HepG2 (cell line): ENCODE measurements at regions of chr6 and their contacts with region 1.

Region 1: DNA sequence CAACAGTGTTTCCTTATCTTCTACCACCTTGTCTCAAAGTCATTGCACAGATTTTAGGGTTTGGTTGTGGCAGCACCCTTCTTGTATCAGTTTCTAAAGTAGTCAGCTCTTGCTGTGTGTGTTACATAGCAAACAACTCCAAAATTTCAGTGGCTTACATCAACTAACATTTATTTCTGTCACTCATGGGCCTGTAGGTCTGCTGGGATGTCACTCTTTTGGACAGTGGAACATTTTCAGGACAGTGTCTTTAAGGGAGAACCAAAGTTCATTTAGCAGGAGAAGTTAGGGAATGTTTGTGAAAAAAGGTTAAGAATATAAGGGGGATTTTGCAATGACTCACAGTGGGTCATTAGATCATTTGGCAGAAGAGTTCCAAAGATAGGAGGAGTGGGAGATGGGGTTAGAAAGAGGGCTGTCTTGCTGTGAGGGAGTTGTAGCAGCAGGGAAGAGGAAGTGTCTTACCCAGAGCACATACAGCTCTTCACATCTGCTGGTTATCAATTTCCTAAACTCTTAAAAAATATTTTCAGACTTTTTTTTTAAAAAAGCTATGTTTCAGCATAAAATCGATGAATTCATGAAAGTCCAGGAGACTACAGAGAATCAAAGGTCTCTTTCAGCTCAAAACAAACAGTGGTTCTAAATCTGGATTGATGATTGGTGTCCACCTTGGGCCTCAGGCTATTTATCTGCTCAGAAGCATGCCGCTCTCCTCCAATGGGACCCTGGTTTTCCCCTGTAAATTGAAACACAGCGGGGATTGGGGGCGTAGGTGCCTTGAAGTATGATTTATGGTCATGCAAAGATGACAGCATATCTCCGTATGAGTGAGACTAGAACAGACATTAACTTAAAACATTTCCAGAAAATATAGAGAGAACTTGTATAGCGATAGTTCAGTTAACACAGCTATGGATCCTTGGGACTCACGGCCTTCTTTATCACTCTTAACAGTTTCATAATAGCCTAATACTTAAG is 117.3 kb downstream of the B3GAT2 start:
- DNase-seq: peak; percentile 34
- ATAC-seq: peak; percentile 92
- H3K4me3 ChIP-seq: no peak overlapping the region
- H3K27ac ChIP-seq: peak overlapping the region; percentile 78
- H3K4me1 ChIP-seq: peaks cover 39% of the 10 kb centered on the region
- H3K27me3 ChIP-seq: no peaks in the 10 kb centered on the region; a peak in 1 of 5 replicates
- CTCF ChIP-seq: no peak
- EP300 ChIP-seq: 0 out of 4 replicates have a peak, but pooled peaks of 1 of the 2 experiments have one; percentile 11
- POLR2A ChIP-seq: no peak
- RAD21 ChIP-seq: no peak

Region 2: GRCh38 chr6:70823651-70824050 is 15.9 kb before region 1 on chr6:
- CTCF ChIA-PET with region 1: no interaction called
- POLR2A ChIA-PET with region 1: no interaction called
- in situ Hi-C with region 1: no loop called
- intact Hi-C with region 1: no loop called
- DNase-seq: no peak
- ATAC-seq: no peak
- H3K4me3 ChIP-seq: no peak overlapping the region
- H3K27ac ChIP-seq: no peak overlapping the region
- H3K4me1 ChIP-seq: no peaks in the 10 kb centered on the region
- H3K27me3 ChIP-seq: no peaks in the 10 kb centered on the region
- CTCF ChIP-seq: no peak
- EP300 ChIP-seq: no peak
- POLR2A ChIP-seq: no peak
- RAD21 ChIP-seq: no peak

Region 3: DNA sequence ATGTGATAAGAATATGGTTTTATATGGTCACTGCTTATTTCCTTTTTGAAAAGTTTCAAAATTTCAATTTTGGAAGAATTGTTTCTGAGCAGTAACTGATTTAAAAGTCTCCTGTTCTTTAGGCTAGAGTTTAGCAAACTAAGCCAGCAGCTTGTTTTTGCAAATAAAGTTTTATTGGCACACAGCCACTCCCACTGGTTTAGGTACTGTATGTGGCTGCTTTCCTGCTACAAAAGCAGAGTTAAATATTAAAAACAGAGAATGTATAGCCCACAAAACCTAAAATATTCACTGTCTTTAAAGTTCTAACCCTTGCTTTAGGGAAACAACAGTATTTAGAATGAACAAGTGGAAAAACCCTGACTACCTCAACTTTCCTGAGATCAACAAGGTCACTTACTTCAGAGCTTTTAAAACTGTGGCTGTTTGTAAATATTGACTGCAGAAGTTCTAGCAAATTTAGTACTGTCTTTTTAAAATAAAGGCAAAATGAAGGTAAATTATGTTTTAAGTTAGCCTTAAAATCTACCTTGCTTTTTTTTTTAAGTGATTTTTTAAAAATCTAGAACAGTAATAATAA is 13.2 kb after region 1 on chr6:
- CTCF ChIA-PET with region 1: no interaction called
- POLR2A ChIA-PET with region 1: no interaction called
- in situ Hi-C with region 1: no loop called
- intact Hi-C with region 1: loop called (anchors 2 kb)
- DNase-seq: peak; percentile 23
- ATAC-seq: peak; percentile 55; the same call in 1 of the 3 replicates
- H3K4me3 ChIP-seq: no peak overlapping the region
- H3K27ac ChIP-seq: peak overlapping the region; percentile 61
- H3K4me1 ChIP-seq: peaks cover 52% of the 10 kb centered on the region
- H3K27me3 ChIP-seq: no peaks in the 10 kb centered on the region
- CTCF ChIP-seq: no peak
- EP300 ChIP-seq: no peak; a peak in 1 of 4 replicates
- POLR2A ChIP-seq: no peak
- RAD21 ChIP-seq: no peak